Activated T-helper 1 cell treated with anti-CD3 and anti-CD28 coated beads, Interleukin-12 subunit alpha, Interleukin-12 subunit beta, Interleukin-2, Interleukin-4 antibody, amounts not matched to agents 30 ng/mL and 10 ng/mL and 1 ng/mL, durations not matched to agents 14 hours and 24 hours and 36 hours (primary cell): ENCODE measurements at regions of chr3 and their contacts with region 1.

Region 1: GRCh38 chr3:141460097-141460704 is 26.6 kb upstream of the RASA2 start:
- DNase-seq: peak; percentile 78
- H3K4me3 Mint-ChIP-seq: no peak overlapping the region
- H3K27ac Mint-ChIP-seq: no peak overlapping the region
- H3K4me1 Mint-ChIP-seq: peaks cover 26% of the 10 kb centered on the region
- H3K27me3 Mint-ChIP-seq: no peaks in the 10 kb centered on the region

Region 2: GRCh38 chr3:141426404-141427034 is 33.7 kb before region 1 on chr3:
- intact Hi-C with region 1: no loop called
- DNase-seq: no peak
- H3K4me3 Mint-ChIP-seq: no peak overlapping the region
- H3K27ac Mint-ChIP-seq: no peak overlapping the region
- H3K4me1 Mint-ChIP-seq: peaks cover 11% of the 10 kb centered on the region
- H3K27me3 Mint-ChIP-seq: no peaks in the 10 kb centered on the region

Region 3: GRCh38 chr3:141477224-141477623 is 17.0 kb after region 1 on chr3:
- intact Hi-C with region 1: loop called (anchors 1 kb)
- DNase-seq: no peak
- H3K4me3 Mint-ChIP-seq: no peak overlapping the region
- H3K27ac Mint-ChIP-seq: no peak overlapping the region
- H3K4me1 Mint-ChIP-seq: peaks cover 43% of the 10 kb centered on the region
- H3K27me3 Mint-ChIP-seq: peaks cover 17% of the 10 kb centered on the region

Region 4: GRCh38 chr3:141498598-141499223 is 38.5 kb after region 1 on chr3:
- intact Hi-C with region 1: loop called (anchors 1 kb)
- DNase-seq: peak; percentile 89
- H3K4me3 Mint-ChIP-seq: peak overlapping the region; percentile 54
- H3K27ac Mint-ChIP-seq: peak overlapping the region; percentile 83
- H3K4me1 Mint-ChIP-seq: peaks cover 66% of the 10 kb centered on the region
- H3K27me3 Mint-ChIP-seq: no peaks in the 10 kb centered on the region

Region 5: DNA sequence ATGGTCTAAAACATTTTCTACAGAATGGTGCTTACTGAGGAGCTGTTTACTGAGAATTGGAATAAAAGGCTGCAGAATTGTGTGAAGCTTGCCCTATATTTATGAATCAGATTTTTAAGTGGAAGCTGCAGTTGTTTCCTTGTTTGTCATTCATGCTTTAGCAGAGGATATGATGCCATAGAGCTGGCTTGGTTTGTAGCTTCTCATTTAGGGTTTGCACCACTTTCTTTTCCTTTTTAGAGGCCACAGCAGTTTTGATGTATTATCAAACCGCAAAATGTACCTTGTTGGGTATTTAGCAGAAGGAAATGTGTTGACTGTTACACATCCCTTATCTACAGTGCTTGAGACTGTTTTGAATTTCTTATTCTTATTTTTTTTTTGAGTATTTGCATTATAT is 92.9 kb after region 1 on chr3:
- intact Hi-C with region 1: loop called (anchors 1 kb)
- DNase-seq: peak; percentile 35
- H3K4me3 Mint-ChIP-seq: peak overlapping the region; percentile 38
- H3K27ac Mint-ChIP-seq: peak overlapping the region; percentile 93
- H3K4me1 Mint-ChIP-seq: peaks cover 52% of the 10 kb centered on the region
- H3K27me3 Mint-ChIP-seq: no peaks in the 10 kb centered on the region

Region 6: DNA sequence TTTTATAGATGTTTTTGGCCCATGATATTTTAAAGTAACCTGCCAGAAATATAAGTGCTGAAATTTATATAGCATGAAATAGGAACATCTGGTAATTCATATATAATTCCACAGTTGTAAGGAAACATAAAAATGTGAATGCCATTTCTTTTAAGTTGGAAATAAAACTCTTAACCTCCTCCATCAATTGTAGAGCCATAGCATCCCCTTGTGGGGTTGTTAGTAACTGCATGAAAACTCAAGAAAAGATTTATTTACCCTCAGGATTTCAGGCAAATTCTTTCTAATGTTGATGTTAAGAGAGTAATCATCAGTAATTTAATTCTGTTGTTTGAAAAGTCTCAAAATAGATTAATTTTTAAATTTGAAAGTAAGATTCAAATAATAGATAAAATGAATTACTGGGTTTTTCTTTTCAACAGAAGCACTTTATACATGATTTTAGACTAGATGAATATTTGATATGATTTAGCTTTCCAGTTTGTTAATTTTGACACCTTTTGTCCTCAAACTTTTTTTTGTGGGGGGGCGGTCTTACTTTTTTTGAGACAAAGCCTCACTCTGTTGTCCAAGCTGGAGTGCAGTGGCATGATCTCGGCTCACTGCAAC is 101.3 kb after region 1 on chr3:
- intact Hi-C with region 1: loop called (anchors 1 kb)
- DNase-seq: peak; percentile 17
- H3K4me3 Mint-ChIP-seq: no peak overlapping the region
- H3K27ac Mint-ChIP-seq: peak overlapping the region; percentile 61
- H3K4me1 Mint-ChIP-seq: peaks cover 24% of the 10 kb centered on the region
- H3K27me3 Mint-ChIP-seq: no peaks in the 10 kb centered on the region

Region 7: DNA sequence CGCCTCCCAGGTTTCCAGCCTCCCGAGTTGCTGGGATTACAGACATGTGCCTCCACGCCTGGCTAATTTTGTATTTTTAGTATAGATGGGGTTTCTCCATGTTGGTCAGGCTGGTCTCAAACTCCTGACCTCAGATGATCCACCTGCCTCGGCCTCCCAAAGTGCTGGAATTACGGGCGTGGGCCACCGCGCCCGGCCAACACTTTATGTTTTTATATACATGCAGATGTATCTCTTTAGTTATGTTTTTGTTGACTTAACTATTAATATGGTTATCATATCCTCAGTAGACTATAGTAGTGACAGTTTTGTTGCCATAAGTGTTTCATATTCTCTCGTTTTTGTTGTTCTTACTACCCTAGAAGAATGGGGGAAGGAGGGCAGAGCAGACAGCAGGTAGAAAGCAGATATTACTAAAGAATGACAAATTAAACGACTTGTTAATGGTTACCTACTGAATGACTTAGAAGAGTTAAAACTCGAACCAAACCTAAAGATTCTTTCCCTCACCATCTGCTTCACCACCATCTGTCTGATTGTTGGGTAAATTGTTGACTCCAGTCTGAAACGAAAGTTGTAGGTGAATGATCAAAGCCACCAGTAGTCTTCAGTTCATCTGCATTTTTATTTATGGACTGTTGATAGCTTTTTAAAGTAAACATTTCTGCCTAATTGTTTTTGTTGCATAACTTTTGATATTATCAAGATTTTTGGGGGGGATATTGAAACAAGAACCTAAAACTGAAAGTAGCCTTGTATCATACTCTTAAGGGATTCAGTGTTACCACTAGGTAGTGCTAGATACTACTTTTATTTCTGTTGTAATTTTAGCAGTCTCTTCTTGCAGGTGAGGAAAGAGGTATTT is 115.9 kb after region 1 on chr3:
- intact Hi-C with region 1: loop called (anchors 1 kb)
- DNase-seq: no peak
- H3K4me3 Mint-ChIP-seq: peak overlapping the region; percentile 25
- H3K27ac Mint-ChIP-seq: peak overlapping the region; percentile 61
- H3K4me1 Mint-ChIP-seq: peaks cover 10% of the 10 kb centered on the region
- H3K27me3 Mint-ChIP-seq: no peaks in the 10 kb centered on the region

Region 8: GRCh38 chr3:141644931-141645330 is 184.7 kb after region 1 on chr3:
- intact Hi-C with region 1: loop called (anchors 1 kb)
- DNase-seq: peak; percentile 51
- H3K4me3 Mint-ChIP-seq: no peak overlapping the region
- H3K27ac Mint-ChIP-seq: no peak overlapping the region
- H3K4me1 Mint-ChIP-seq: no peaks in the 10 kb centered on the region
- H3K27me3 Mint-ChIP-seq: peaks cover 1% of the 10 kb centered on the region